WTC11 (cell line): ENCODE measurements at regions of chr1 and their contacts with region 1.

Region 1: GRCh38 chr1:33455539-33456501 is 16.6 kb upstream of the ZSCAN20 start:
- DNase-seq: peak; percentile 52
- ATAC-seq: peak; percentile 93
- H3K4me3 Mint-ChIP-seq: no peak overlapping the region
- H3K27ac Mint-ChIP-seq: no peak overlapping the region
- H3K4me1 Mint-ChIP-seq: peaks cover 12% of the 10 kb centered on the region
- H3K27me3 Mint-ChIP-seq: peaks cover 14% of the 10 kb centered on the region; the same call in 1 of the 2 replicates
- CTCF ChIP-seq: no peak

Region 2: DNA sequence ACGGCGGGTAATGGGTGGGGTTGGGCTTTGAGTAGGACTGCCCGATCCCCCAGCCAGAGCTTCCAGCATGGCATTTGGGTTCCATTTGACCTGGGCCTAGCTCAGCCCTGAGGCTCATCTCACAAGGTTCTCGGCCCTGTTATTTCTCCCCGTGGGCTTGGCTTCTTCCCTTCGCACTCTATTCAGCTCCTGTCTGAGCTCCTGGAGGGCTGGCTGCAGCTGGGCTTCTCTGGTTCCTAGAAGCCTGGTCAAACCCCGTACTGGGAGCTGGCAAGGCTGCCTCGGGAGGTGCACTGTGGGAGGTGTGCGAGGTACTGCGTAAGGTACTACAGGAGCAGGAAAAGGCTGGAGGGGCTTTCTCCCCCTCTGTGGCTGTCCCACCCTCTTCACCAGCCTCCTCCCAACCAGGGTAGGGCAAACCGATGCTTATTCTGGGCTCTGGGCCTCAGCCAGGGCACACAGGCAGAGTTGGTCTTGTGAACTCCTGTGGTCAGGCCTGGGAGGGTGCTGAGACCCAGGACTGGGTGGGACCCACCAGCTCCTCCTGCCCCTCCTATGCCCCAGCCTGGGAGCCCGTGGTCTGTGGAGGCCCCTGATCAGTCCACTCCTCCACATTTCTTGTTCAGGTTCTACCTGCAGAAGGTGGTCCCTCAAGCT is 135.7 kb before region 1 on chr1:
- CTCF ChIA-PET with region 1: interaction called, 10 read pairs
- POLR2A ChIA-PET with region 1: no interaction called
- DNase-seq: no peak
- ATAC-seq: no peak
- H3K4me3 Mint-ChIP-seq: no peak overlapping the region
- H3K27ac Mint-ChIP-seq: no peak overlapping the region
- H3K4me1 Mint-ChIP-seq: no peaks in the 10 kb centered on the region
- H3K27me3 Mint-ChIP-seq: peaks cover 23% of the 10 kb centered on the region
- CTCF ChIP-seq: no peak

Region 3: DNA sequence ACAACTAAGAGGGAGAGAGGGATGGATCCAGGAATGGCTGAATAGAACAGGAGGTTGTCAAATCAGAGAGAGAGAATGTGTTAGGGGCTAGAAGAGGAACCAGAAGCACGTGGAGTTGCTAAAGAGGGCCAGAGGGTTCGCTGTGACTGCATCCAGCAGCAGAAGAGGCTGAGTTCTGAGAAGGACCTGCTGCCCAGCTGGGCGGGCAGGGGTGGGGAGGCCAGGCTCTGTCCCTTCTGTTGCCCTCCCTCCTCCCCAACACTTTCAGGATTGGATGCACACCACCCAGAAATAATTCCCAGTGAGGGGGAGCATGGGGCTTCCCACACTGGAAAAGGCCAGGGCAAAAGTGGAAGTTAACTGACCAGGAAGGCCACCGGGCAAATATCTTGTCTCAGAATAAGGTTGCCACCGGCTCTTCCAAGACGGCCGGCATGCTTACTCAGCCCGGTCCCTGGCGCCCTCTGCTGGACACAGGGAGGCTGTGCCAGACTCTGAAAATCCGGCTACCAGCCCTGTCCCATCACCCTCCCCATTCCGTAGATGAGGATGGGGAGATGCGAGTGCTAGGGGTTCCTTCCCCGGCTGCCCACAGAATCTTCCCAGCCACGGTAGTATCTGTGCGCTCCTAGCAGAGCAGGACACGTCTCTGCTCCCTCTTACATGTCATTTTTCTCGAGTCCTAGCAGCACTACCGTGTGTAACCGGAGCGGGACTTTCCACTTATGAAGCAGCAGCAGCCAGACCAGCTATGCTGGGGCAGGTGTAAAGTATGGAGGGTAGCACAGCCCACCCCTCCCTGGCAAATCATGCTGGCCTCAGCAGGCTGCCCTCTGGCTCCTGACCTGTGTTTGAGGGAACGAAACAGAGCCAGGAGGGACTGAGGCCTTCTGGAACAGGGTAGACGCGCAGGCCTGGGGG is 88.1 kb before region 1 on chr1:
- CTCF ChIA-PET with region 1: interaction called, 17 read pairs
- POLR2A ChIA-PET with region 1: no interaction called
- DNase-seq: peak; percentile 93
- ATAC-seq: peak; percentile 71
- H3K4me3 Mint-ChIP-seq: no peak overlapping the region
- H3K27ac Mint-ChIP-seq: no peak overlapping the region
- H3K4me1 Mint-ChIP-seq: peaks cover 35% of the 10 kb centered on the region
- H3K27me3 Mint-ChIP-seq: peaks cover 20% of the 10 kb centered on the region
- CTCF ChIP-seq: peak; percentile 90

Region 4: GRCh38 chr1:33443080-33443704 is 12.6 kb before region 1 on chr1:
- CTCF ChIA-PET with region 1: interaction called, 25 read pairs
- POLR2A ChIA-PET with region 1: no interaction called
- DNase-seq: no peak
- ATAC-seq: peak; percentile 50
- H3K4me3 Mint-ChIP-seq: no peak overlapping the region
- H3K27ac Mint-ChIP-seq: no peak overlapping the region
- H3K4me1 Mint-ChIP-seq: peaks cover 13% of the 10 kb centered on the region
- H3K27me3 Mint-ChIP-seq: peaks cover 19% of the 10 kb centered on the region
- CTCF ChIP-seq: no peak

Region 5: GRCh38 chr1:33466159-33466558 is 10.3 kb after region 1 on chr1:
- CTCF ChIA-PET with region 1: interaction called, 19 read pairs
- POLR2A ChIA-PET with region 1: no interaction called
- DNase-seq: no peak
- ATAC-seq: no peak
- H3K4me3 Mint-ChIP-seq: no peak overlapping the region
- H3K27ac Mint-ChIP-seq: no peak overlapping the region
- H3K4me1 Mint-ChIP-seq: peaks cover 5% of the 10 kb centered on the region
- H3K27me3 Mint-ChIP-seq: peaks cover 12% of the 10 kb centered on the region
- CTCF ChIP-seq: no peak